Heart right ventricle (tissue), 16 donors: ENCODE measurements at regions of chr2 and their contacts with region 1.

Region 1: DNA sequence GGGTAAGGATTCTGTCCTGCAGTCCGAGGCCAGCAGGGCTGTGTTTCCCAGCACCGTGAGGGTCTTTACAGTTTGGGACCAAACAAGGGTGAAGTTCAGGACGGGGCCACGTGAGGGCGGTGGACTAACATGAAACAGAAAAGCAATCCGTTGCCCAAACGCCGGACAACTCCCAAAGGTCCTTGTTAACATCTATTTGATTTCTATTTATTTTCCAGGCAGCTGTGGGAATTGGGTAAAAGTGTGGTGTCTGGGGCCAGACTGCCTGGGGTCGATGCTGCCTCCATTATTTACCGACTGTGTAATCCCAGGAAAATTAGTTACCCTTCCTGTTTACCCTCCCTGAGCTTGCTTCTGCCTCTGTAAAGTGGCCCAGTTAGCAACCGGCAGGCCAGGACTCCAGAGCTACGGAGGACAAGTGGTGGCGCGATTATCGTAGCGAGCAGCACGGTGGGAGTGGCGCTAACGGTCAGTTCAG is 66.3 kb upstream of the TCF7L1 start:
- DNase-seq: peak; percentile 73 to 75
- ATAC-seq: peak; percentile 67 to 91 (median 88)
- H3K4me3 ChIP-seq: peak overlapping the region in 8 of 10 donors; percentile 14 to 51 (median 41)
- H3K27ac ChIP-seq: peak overlapping the region in 2 of 10 donors; percentile 24 to 29
- H3K4me1 ChIP-seq: peaks cover 0 to 12% (median 10%) of the 10 kb centered on the region in 9 donors
- H3K27me3 ChIP-seq: peaks cover 0 to 17% (median 0%) of the 10 kb centered on the region in 7 donors
- CTCF ChIP-seq: peak; percentile 75 to 93 (median 87)

Region 2: DNA sequence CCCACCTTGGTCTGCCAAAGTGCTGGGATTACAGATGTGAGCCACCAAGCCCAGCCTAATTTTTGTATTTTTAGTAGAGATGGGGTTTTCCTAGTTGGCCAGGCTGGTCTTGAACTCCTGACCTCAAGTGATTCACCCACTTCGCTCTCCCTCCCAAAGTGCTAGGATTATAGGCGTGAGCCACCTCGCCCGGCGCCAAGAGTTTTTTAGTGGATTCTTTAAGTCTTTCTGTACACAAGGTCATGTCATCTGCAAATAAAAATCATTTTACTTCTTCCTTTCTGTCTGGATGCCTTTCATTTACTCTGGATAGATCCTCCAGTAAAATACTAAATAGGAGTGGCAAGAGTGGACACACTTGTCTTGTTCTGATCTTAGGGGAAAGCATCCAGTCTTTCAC is 34.3 kb before region 1 on chr2:
- intact Hi-C with region 1: loop called in 1 of 10 experiments (anchors 1 kb)
- DNase-seq: no peak
- ATAC-seq: no peak
- H3K4me3 ChIP-seq: no peak overlapping the region
- H3K27ac ChIP-seq: no peak overlapping the region
- H3K4me1 ChIP-seq: peaks cover 0 to 6% (median 0%) of the 10 kb centered on the region in 9 donors
- H3K27me3 ChIP-seq: no peaks in the 10 kb centered on the region
- CTCF ChIP-seq: no peak

Region 3: DNA sequence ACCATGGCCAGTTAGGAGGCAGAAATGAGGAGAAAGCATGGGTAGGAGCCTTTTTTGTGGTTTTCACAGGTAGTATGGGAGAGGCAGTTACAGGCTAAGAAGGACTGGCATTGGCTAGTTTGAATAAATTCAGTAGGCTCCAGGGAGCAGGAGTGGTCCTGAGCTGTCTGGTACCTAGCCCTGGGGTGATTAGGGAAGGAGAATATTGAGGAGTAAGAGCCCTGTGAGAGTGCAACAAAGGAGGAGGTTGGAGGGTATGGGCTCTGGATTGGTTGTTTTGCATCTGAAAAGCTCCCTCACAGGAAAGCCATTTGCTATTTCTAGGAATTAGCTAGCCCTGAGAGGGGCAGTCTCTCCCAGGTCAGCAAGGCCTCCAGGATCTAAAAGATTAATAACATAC is 53.0 kb after region 1 on chr2:
- intact Hi-C with region 1: loop called in 2 of 10 experiments (anchors 10 kb)
- DNase-seq: no peak
- ATAC-seq: no peak
- H3K4me3 ChIP-seq: no peak overlapping the region
- H3K27ac ChIP-seq: no peak overlapping the region
- H3K4me1 ChIP-seq: no peaks in the 10 kb centered on the region
- H3K27me3 ChIP-seq: no peaks in the 10 kb centered on the region
- CTCF ChIP-seq: no peak

Region 4: DNA sequence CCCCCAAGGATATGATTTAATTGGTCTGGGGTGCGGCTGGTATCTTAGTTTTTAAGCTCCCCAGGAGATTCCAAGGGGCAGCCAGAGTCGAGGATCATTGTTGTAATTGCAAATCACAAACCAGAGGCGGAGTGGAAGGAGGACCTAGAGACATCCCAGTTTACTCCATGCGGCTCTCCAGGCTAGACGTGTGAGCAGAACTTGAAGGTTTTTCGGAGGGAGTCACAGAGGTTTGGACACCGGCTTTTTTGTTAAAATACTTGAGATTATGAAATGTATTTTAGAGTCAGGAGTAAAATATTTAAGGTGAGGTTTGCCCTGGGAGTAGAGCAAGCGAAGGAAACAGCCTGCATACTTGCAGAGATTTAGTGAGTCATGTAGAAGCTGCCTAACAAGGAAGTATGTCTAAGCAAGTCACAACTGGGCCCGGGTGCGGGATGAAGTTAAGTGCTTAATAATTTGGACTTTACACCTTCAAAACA is 221.4 kb after region 1 on chr2:
- intact Hi-C with region 1: loop called in 3 of 10 experiments (anchors 1 to 5 kb)
- DNase-seq: no peak
- ATAC-seq: no peak
- H3K4me3 ChIP-seq: no peak overlapping the region
- H3K27ac ChIP-seq: no peak overlapping the region
- H3K4me1 ChIP-seq: peaks cover 0 to 18% (median 12%) of the 10 kb centered on the region in 9 donors
- H3K27me3 ChIP-seq: no peaks in the 10 kb centered on the region
- CTCF ChIP-seq: no peak

Region 5: GRCh38 chr2:85302121-85302520 is 235.2 kb after region 1 on chr2:
- intact Hi-C with region 1: loop called (anchors 1 to 5 kb)
- DNase-seq: no peak
- ATAC-seq: peak in 5 of 8 donors; percentile 27 to 71 (median 51)
- H3K4me3 ChIP-seq: no peak overlapping the region
- H3K27ac ChIP-seq: no peak overlapping the region
- H3K4me1 ChIP-seq: peaks cover 0 to 9% (median 0%) of the 10 kb centered on the region in 9 donors
- H3K27me3 ChIP-seq: no peaks in the 10 kb centered on the region
- CTCF ChIP-seq: no peak